H1 (cell line): ENCODE measurements at regions of chr5 and their contacts with region 1.

Region 1: DNA sequence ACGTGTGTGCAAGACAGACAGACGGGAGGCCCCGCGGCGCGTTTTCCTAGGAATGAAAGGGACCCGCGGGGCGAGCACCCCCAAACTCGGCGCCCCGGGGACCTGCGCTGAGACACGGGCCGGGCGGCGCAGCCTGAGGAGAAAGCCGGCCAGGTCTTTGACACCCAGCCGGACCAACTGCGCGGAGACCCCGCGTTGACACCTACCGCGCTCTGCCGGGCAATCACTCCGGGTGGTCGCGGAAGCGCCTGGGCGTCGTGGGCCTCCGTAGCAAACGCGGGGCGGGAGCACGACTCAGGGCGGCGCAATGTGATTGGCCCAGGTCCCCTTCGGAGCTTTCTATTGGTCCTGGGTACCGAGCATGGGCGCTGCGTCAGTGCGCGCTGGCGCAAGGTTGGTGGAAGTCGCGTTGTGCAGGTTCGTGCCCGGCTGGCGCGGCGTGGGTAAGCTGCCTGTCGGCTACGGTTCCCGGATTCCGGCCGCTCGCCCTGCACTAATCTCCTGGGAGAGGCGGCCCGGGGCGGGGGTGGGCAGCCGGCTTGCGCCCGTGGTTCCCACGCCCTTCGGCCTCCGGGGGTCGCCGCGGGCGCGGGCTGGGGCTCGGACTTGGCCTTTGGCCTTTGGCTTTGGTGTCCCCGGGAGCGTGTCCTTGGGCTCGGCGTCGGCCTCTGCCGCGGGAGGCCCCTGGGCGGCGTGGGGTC is at the starts of genes FASTKD3 and MTRR:
- DNase-seq: peak in 1 of 2 experiments; percentile 89
- H3K4me3 ChIP-seq: peak within 1 kb of the TSS; percentile 70 to 93 (median 74)
- H3K27ac ChIP-seq: peak within 1 kb of the TSS; percentile 43; the same call in 1 of the 2 replicates
- H3K4me1 ChIP-seq: peaks cover 0 to 4% (median 0%) of the 10 kb centered on the region in 4 experiments; a peak in 2 of 7 replicates
- H3K27me3 ChIP-seq: no peaks in the 10 kb centered on the region
- CTCF ChIP-seq: no peak
- EP300 ChIP-seq: no peak
- POLR2A ChIP-seq: peak in 1 of 2 experiments; percentile 57; a peak in 2 of 3 replicates
- RAD21 ChIP-seq: no peak
- total RNA-seq, gene FASTKD3: 7.6 and 8.7 TPM in 2 replicates
- total RNA-seq, gene MTRR: 51.4 and 53.8 TPM in 2 replicates

Region 2: DNA sequence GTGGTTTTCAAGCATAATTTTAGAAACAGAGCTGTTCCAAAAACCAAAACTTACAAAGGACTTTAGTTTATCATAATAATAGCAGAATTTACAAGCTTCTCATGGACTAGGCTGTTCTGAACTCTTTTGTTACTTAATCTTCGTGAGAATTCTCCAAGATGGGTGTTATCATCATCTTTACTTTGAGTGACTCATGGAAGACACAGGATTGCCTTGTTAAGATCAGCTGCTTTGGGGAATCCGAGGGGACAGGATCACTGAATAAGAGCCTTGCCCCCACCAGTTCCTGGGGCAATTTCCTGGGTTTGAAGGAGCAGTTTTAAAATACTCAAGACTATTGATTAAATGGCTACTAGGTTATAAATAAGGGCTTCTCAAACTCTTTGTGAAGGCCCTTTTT is 98.5 kb before region 1 on chr5:
- CTCF ChIA-PET with region 1: no interaction called
- POLR2A ChIA-PET with region 1: no interaction called
- DNase-seq: no peak
- H3K4me3 ChIP-seq: no peak overlapping the region
- H3K27ac ChIP-seq: no peak overlapping the region
- H3K4me1 ChIP-seq: no peaks in the 10 kb centered on the region
- H3K27me3 ChIP-seq: no peaks in the 10 kb centered on the region
- CTCF ChIP-seq: no peak
- EP300 ChIP-seq: no peak
- POLR2A ChIP-seq: no peak
- RAD21 ChIP-seq: no peak

Region 3: GRCh38 chr5:7850395-7851239 is 18.3 kb before region 1 on chr5 and contains the start of gene CFAP90:
- CTCF ChIA-PET with region 1: interaction called, 10 read pairs
- POLR2A ChIA-PET with region 1: interaction called, 5 read pairs
- DNase-seq: peak in 1 of 2 experiments; percentile 93
- H3K4me3 ChIP-seq: peak within 1 kb of the TSS; percentile 61 to 89 (median 67)
- H3K27ac ChIP-seq: no peak within 1 kb of the TSS; the same call in 1 of the 2 replicates
- H3K4me1 ChIP-seq: peaks cover 0 to 8% (median 3%) of the 10 kb centered on the region in 4 experiments; a peak in 4 of 7 replicates
- H3K27me3 ChIP-seq: peaks cover 0 to 16% (median 9%) of the 10 kb centered on the region in 4 experiments; a peak in 4 of 7 replicates
- CTCF ChIP-seq: peak; percentile 40 to 69 (median 69); a peak in 3 of 4 replicates
- EP300 ChIP-seq: no peak
- POLR2A ChIP-seq: peak in 1 of 2 experiments; percentile 34; a peak in 1 of 3 replicates
- RAD21 ChIP-seq: peak in 1 of 2 experiments; percentile 11; a peak in 1 of 4 replicates
- total RNA-seq, gene CFAP90: 0.39 and 0.40 TPM in 2 replicates

Region 4: DNA sequence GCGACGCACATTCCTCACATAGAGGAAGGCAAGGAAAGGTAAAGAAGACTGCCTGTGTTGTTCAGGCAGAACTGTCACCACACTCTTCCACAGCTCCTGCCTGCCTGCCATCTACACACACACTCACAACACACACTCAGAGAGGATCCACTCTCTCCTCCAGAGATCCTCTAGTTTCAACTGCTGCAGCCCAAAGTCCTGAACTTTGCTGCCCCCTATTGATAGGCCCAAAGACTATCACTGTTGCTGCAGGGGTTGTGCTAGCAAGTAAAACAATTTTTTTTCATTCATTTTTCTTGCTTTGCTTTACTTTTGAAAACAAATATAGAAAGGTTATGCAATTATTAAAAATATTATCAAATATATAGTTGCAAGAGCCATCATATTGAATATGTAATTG is 12.1 kb before region 1 on chr5:
- CTCF ChIA-PET with region 1: interaction called, 14 read pairs
- POLR2A ChIA-PET with region 1: interaction called, 6 read pairs
- DNase-seq: peak in 1 of 2 experiments; percentile 56
- H3K4me3 ChIP-seq: no peak overlapping the region
- H3K27ac ChIP-seq: no peak overlapping the region
- H3K4me1 ChIP-seq: no peaks in the 10 kb centered on the region
- H3K27me3 ChIP-seq: peaks cover 0 to under 1% (median 0%) of the 10 kb centered on the region in 4 experiments; a peak in 1 of 7 replicates
- CTCF ChIP-seq: peak; percentile 48 to 86 (median 86)
- EP300 ChIP-seq: no peak
- POLR2A ChIP-seq: no peak
- RAD21 ChIP-seq: peak; percentile 94 to 95

Region 5: GRCh38 chr5:7886849-7887475 is 18.0 kb after region 1 on chr5:
- CTCF ChIA-PET with region 1: interaction called, 25 read pairs
- POLR2A ChIA-PET with region 1: interaction called, 3 read pairs
- DNase-seq: no peak
- H3K4me3 ChIP-seq: no peak overlapping the region
- H3K27ac ChIP-seq: no peak overlapping the region
- H3K4me1 ChIP-seq: no peaks in the 10 kb centered on the region
- H3K27me3 ChIP-seq: no peaks in the 10 kb centered on the region
- CTCF ChIP-seq: peak in 1 of 3 experiments; percentile 20; a peak in 2 of 4 replicates
- EP300 ChIP-seq: no peak
- POLR2A ChIP-seq: no peak
- RAD21 ChIP-seq: peak; percentile 27 to 37; a peak in 3 of 4 replicates